ENCODE measurements at regions of chr7 and their contacts with region 1.

Region 1: GRCh38 chr7:66114793-66115649 is at the start of gene CRCP:
- DNase-seq: peak; percentile 93
- ATAC-seq: peak; percentile 91
- total RNA-seq, gene CRCP: 23.6 TPM

Region 2: DNA sequence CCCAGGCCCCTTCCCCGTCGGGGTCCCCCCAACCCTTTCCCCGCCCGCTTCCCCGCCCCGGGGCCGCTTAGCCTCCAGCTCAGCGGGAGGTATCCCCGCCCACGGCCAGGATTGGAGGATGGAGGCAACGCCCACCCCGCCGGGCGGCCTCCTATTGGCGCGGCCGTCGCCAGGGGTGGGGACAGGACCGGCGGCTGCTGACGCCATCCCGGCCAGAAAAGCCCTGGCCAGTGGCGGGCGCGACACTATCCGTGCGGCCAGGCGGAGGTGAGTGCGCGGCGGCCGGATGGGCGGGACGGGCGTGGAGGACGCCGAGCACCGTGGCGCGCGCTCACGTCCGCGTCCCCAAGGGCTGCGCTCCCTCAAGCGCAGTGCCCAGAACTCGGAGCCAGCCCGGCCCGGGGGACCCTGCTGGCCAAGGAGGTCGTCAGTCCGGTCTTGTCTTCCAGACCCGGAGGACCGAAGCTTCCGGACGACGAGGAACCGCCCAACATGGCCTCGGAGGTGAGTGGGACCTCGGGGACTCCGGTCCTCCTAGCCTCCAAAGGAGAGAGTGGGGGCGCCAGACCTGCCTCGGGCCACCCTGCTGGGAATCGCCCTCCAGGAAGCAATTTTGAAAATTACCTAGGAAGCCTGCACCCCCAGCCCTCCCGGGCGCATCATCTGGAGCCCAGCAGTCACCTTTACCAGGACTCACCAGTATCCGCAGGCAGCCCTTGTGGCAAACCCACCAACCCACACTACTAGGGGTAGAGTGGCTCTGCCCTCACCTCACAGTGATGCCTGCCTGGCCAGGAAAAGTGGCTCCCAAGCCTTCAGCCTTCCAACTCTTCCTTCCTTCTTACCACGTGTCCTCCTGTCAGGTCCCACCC is 39.2 kb before region 1 on chr7 and contains the start of gene ASL:
- intact Hi-C with region 1: loop called (anchors 5 kb)
- DNase-seq: peak; percentile 98
- ATAC-seq: peak; percentile 100
- total RNA-seq, gene ASL: 11.8 TPM

Region 3: DNA sequence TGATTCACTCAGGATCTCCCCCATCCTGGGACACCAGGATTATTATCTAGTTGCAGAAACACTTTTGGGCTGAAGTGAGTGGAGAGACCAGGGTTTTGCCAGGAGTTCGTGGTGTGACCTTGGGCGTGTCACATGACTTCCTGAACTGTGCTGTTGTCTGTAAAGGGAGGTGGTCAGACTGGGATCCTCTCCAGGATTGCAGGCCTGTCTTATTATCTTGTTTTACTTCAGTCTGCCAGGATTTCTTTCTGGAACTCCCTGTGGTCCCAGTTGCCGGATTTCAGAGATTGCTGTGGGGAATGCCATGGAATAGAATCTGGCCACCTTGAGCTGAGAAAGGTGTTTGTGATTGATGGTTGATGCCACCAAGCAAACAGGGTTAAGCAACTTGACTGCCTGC is 35.5 kb after region 1 on chr7:
- intact Hi-C with region 1: no loop called
- DNase-seq: peak; percentile 75
- ATAC-seq: peak; percentile 67

Measured in Right ventricle myocardium inferior (tissue), 1 donor.